Mammary epithelial cell (primary cell): ENCODE measurements at regions of chr12 and their contacts with region 1.

Region 1: GRCh38 chr12:68378872-68379782 is 47.0 kb upstream of the MDM1 start:
- DNase-seq: no peak
- H3K4me3 ChIP-seq: no peak overlapping the region
- H3K27ac ChIP-seq: no peak overlapping the region
- H3K4me1 ChIP-seq: peaks cover 5% of the 10 kb centered on the region
- H3K27me3 ChIP-seq: no peaks in the 10 kb centered on the region
- CTCF ChIP-seq: no peak

Region 2: GRCh38 chr12:68158432-68158831 is 220.7 kb before region 1 on chr12:
- CTCF ChIA-PET with region 1: no interaction called
- dilution Hi-C with region 1: no loop called
- in situ Hi-C with region 1: no loop called
- intact Hi-C with region 1: no loop called
- DNase-seq: peak; percentile 35
- H3K4me3 ChIP-seq: no peak overlapping the region
- H3K27ac ChIP-seq: no peak overlapping the region
- H3K4me1 ChIP-seq: peaks cover 9% of the 10 kb centered on the region
- H3K27me3 ChIP-seq: no peaks in the 10 kb centered on the region
- CTCF ChIP-seq: peak; percentile 49 to 75

Region 3: GRCh38 chr12:68435816-68436215 is 56.7 kb after region 1 on chr12:
- CTCF ChIA-PET with region 1: no interaction called
- dilution Hi-C with region 1: loop called (anchors 5 kb)
- in situ Hi-C with region 1: no loop called
- intact Hi-C with region 1: no loop called
- DNase-seq: peak; percentile 71
- H3K4me3 ChIP-seq: no peak overlapping the region
- H3K27ac ChIP-seq: no peak overlapping the region
- H3K4me1 ChIP-seq: peaks cover 14% of the 10 kb centered on the region
- H3K27me3 ChIP-seq: no peaks in the 10 kb centered on the region
- CTCF ChIP-seq: no peak